K562 (cell line): ENCODE measurements at regions of chr2 and their contacts with region 1.

Region 1: DNA sequence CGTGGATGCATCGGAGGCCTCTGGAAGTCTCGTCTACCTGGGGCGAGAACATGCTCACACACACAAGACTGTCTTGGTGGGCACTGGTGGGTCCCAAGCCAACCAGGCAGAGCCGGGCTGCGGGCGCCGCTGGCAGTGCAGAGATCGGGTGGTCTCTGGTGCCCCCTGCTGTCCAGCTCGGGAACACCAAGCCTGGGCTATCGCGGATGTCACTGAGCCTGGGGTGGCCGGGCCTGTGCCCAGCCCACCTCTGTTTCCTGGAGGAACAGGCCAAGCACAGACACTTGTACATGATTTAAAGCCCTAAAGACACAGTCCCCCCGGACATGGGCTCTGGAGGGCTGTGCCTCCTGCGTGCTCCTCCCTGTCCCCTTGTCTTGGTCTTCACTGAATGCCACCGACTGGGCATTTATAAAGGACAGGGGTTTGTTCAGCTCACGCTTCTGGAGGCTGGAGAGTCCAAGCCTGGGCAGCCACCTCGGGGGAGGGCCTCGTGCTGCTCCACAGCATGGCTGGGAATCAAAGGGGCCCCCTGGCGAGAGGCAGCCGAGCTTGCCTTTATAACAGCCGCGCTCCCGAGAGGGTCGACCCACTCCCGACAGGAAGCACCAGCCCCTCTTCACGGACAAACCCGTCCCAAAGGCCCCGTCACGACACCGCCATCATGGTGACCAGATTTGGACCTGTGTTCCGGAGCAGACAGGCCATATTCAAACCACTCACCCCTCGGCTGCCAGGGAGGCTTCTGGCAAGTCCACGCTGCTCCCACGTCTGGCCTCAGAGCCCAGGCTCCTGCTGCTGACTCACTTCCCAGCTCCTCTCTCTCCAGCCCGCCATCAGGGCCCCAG is 3.6 kb upstream of the OTOS start:
- DNase-seq: peak; percentile 58 to 76 (median 74)
- ATAC-seq: peak; percentile 95
- H3K4me3 ChIP-seq: no peak overlapping the region
- H3K27ac ChIP-seq: no peak overlapping the region
- H3K4me1 ChIP-seq: peaks cover 0 to 12% of the 10 kb centered on the region in 2 experiments; a peak in 2 of 5 replicates
- H3K27me3 ChIP-seq: peaks cover 0 to 50% of the 10 kb centered on the region in 2 experiments; a peak in 3 of 5 replicates
- CTCF ChIP-seq: peak; percentile 74 to 82 (median 75)
- EP300 ChIP-seq: no peak
- POLR2A ChIP-seq: no peak
- RAD21 ChIP-seq: peak; percentile 55 to 76

Region 2: DNA sequence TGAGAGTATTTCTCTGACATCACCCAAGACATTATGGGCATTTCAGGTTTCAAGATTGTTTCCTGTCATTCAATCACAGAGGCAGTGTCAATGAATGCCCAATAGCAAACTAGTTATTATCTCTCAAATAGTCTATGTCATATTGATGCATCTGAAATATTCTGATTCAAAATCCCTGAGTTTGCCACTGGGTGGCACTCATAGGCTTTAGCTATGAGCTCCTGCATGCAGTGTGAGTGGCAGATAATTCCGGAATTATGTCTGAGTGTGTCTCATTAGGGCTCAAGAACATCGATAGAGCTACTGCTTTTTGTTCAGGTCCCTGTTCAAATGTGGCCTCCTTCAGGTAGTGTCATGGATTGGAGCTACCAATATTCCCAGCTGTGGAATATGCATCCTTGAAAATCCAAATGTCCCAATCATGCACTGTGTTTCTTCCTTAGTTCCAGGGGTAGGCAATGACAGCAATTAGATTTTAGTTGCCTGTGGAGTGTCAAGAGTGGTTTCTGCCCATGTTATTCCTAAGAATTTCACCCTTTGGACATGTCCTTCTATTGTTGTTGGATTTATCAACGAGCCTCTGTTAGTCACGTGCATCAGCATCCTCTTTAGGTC is 82.9 kb before region 1 on chr2:
- CTCF ChIA-PET with region 1: interaction called, 7 read pairs
- POLR2A ChIA-PET with region 1: interaction called, 3 read pairs
- in situ Hi-C with region 1: loop called (anchors 5 kb)
- intact Hi-C with region 1: loop called (anchors 2 kb)
- DNase-seq: peak; percentile 14 to 47 (median 20)
- ATAC-seq: peak; percentile 80
- H3K4me3 ChIP-seq: no peak overlapping the region
- H3K27ac ChIP-seq: no peak overlapping the region
- H3K4me1 ChIP-seq: no peaks in the 10 kb centered on the region
- H3K27me3 ChIP-seq: peaks cover 0 to 21% of the 10 kb centered on the region in 2 experiments; a peak in 2 of 5 replicates
- CTCF ChIP-seq: peak; percentile 43 to 65 (median 51)
- EP300 ChIP-seq: no peak
- POLR2A ChIP-seq: no peak
- RAD21 ChIP-seq: peak; percentile 45 to 74

Region 3: GRCh38 chr2:240255811-240256703 is 112.0 kb after region 1 on chr2:
- CTCF ChIA-PET with region 1: no interaction called
- POLR2A ChIA-PET with region 1: no interaction called
- in situ Hi-C with region 1: no loop called
- intact Hi-C with region 1: no loop called
- DNase-seq: no peak
- ATAC-seq: no peak
- H3K4me3 ChIP-seq: no peak overlapping the region
- H3K27ac ChIP-seq: no peak overlapping the region
- H3K4me1 ChIP-seq: peaks cover 10 to 44% of the 10 kb centered on the region in 2 experiments
- H3K27me3 ChIP-seq: peaks cover 2 to 10% of the 10 kb centered on the region in 2 experiments; a peak in 2 of 5 replicates
- CTCF ChIP-seq: no peak
- EP300 ChIP-seq: no peak
- POLR2A ChIP-seq: no peak
- RAD21 ChIP-seq: no peak